T-cell (primary cell): ENCODE measurements at regions of chr1 and their contacts with region 1.

Region 1: DNA sequence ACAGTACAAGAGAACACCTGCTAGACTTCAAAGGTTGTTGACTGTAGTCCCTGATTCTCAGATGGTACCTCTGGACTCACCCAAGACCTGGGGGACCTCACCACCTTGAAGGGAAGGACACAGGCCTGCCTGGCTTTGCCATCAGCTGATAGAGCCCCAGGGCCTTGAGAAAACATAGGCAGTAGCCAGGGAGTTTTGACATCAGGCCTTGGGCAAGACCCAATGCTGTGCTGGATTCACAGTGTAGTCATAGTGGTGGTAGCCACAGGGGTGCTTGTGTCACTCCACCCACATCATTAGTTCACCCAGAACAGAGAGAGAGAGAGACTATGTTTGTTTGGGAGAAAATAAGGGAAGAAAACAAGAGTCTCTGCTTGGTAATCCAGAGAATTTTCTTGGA is 297.5 kb upstream of the RGS18 start:
- DNase-seq: no peak
- ATAC-seq: no peak
- H3K4me3 ChIP-seq: no peak overlapping the region
- H3K4me3 Mint-ChIP-seq: no peak overlapping the region
- H3K27ac ChIP-seq: no peak overlapping the region
- H3K27ac Mint-ChIP-seq: no peak overlapping the region
- H3K4me1 ChIP-seq: no peaks in the 10 kb centered on the region
- H3K4me1 Mint-ChIP-seq: no peaks in the 10 kb centered on the region
- H3K27me3 ChIP-seq: no peaks in the 10 kb centered on the region
- H3K27me3 Mint-ChIP-seq: no peaks in the 10 kb centered on the region

Region 2: GRCh38 chr1:191888985-191889622 is 28.3 kb after region 1 on chr1:
- CTCF ChIA-PET with region 1: no interaction called
- POLR2A ChIA-PET with region 1: interaction called in 1 of 2 experiments, 12 read pairs
- DNase-seq: no peak
- ATAC-seq: no peak
- H3K4me3 ChIP-seq: no peak overlapping the region
- H3K4me3 Mint-ChIP-seq: no peak overlapping the region
- H3K27ac ChIP-seq: no peak overlapping the region
- H3K27ac Mint-ChIP-seq: no peak overlapping the region
- H3K4me1 ChIP-seq: no peaks in the 10 kb centered on the region
- H3K4me1 Mint-ChIP-seq: no peaks in the 10 kb centered on the region
- H3K27me3 ChIP-seq: no peaks in the 10 kb centered on the region
- H3K27me3 Mint-ChIP-seq: no peaks in the 10 kb centered on the region